ENCODE measurements at regions of chr5 and their contacts with region 1.

Region 1: GRCh38 chr5:96344678-96345577 is 88.1 kb downstream of the PCSK1 start:
- DNase-seq: no peak
- H3K4me3 ChIP-seq: no peak overlapping the region
- H3K27ac ChIP-seq: no peak overlapping the region
- H3K4me1 ChIP-seq: no peaks in the 10 kb centered on the region
- H3K27me3 ChIP-seq: no peaks in the 10 kb centered on the region
- CTCF ChIP-seq: peak in 2 of 3 experiments; percentile 12 to 74
- POLR2A ChIP-seq: no peak

Region 2: DNA sequence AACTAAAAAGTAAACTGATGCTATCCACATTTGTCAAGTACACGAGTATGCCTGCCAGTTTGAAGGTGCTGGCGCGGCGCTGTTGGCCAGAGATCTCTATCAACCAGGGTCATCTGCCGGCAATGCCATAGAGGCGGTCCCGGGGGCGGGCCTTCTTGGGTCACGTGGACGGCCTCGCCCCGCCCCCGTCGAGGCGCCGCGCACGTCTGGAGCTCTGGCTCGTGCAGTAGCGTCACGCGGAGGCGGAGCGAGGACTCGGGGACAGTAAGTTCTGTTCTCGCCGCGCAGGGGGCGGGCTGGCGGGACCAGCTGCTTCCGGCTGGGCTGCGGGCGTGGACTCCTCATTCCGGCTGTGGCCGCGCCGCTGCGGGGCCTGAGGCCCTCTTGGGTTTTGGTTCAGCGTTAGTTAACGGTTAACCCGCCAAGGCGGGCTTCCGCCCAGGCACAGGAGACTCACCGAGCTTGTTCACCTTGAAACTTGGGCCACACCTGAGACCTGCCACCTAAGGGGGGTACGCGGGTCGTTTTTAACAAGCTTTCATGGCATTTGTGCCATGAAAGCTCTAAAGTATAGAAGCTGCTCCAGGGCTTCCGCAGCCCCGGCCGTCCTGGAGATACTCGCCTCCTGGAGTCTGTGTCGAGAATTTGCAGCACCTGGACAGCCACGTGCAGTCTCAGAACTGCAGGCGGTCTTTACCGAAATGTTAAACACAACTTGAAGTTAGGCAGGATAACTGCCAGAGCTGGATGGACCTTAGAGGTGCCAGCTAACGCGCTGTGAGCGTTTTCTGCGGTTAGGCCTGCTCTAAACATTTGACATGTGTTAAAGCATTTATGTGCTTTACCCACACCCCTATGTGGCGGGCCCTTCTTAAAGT is 698.1 kb before region 1 on chr5 and contains the start of gene RFESD:
- intact Hi-C with region 1: loop called (anchors 10 kb)
- DNase-seq: peak in 1 of 2 donors; percentile 98
- H3K4me3 ChIP-seq: peak within 1 kb of the TSS; percentile 43 to 65
- H3K27ac ChIP-seq: peak within 1 kb of the TSS; percentile 97
- H3K4me1 ChIP-seq: peaks cover 9% of the 10 kb centered on the region
- H3K27me3 ChIP-seq: no peaks in the 10 kb centered on the region
- CTCF ChIP-seq: peak in 1 of 3 experiments; percentile 11
- POLR2A ChIP-seq: peak in 1 of 2 donors; percentile 92
- total RNA-seq, gene RFESD: 1.2 TPM

Region 3: GRCh38 chr5:96601811-96602244 is 256.9 kb after region 1 on chr5:
- intact Hi-C with region 1: loop called (anchors 5 kb)
- DNase-seq: no peak
- H3K4me3 ChIP-seq: no peak overlapping the region
- H3K27ac ChIP-seq: no peak overlapping the region
- H3K4me1 ChIP-seq: no peaks in the 10 kb centered on the region
- H3K27me3 ChIP-seq: no peaks in the 10 kb centered on the region
- CTCF ChIP-seq: peak; percentile 33 to 75 (median 73)
- POLR2A ChIP-seq: no peak

Measured in vagina (tissue), 2 donors.